Activated CD4-positive, alpha-beta memory T cell treated with anti-CD3 and anti-CD28 coated beads for 36 hours (primary cell): ENCODE measurements at regions of chrX and their contacts with region 1.

Region 1: DNA sequence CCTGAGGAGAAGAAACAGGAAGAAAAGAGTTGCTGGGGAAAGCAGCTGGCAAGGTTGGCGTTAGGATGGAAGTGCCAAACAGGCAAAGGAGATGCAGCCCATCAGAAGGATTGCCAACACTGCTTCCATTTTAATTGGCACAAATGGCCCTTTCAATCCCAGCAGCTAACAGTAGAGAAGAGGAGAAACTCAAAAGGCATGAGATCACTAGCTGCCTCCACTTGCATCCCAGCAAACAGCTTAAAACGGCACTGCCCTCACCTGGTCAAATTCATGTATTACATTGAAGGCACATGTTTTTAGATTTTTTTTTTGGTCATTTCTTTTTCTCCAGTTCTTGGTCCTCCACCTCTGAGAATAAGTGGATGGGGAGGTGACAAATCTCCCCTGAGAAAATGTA is 14.9 kb upstream of the LOC101059915 start:
- DNase-seq: peak; percentile 59
- H3K4me3 Mint-ChIP-seq: no peak overlapping the region
- H3K27ac Mint-ChIP-seq: no peak overlapping the region
- H3K4me1 Mint-ChIP-seq: peaks cover 5% of the 10 kb centered on the region
- H3K27me3 Mint-ChIP-seq: no peaks in the 10 kb centered on the region

Region 2: DNA sequence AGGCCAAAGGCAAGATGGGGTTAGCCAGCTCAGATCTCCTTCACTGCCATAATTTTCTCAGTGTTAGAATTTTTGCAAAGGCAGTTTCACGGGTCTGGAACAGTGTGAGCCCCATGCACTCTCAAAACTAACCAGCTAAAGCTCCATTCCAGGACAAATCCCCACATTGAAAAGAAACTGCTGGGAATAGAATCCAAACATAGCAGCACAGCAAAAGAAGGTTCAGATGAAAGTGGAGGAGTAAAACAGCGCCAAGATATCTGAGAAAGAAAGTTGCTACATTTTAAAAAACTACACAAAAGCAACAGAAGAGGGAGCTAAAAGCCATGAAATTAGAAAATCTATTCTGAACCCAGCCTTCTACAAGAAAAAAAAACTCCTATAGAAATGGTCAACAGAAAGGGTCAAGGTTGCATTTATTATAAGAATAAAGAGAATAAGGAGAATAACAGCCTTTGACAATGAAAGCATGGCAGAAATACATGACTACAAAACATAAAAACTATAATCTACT is 681.9 kb before region 1 on chrX:
- CTCF ChIA-PET with region 1: no interaction called
- POLR2A ChIA-PET with region 1: no interaction called
- intact Hi-C with region 1: loop called (anchors 5 kb)
- DNase-seq: no peak
- H3K4me3 Mint-ChIP-seq: no peak overlapping the region
- H3K27ac Mint-ChIP-seq: no peak overlapping the region
- H3K4me1 Mint-ChIP-seq: peaks cover 6% of the 10 kb centered on the region
- H3K27me3 Mint-ChIP-seq: no peaks in the 10 kb centered on the region

Region 3: DNA sequence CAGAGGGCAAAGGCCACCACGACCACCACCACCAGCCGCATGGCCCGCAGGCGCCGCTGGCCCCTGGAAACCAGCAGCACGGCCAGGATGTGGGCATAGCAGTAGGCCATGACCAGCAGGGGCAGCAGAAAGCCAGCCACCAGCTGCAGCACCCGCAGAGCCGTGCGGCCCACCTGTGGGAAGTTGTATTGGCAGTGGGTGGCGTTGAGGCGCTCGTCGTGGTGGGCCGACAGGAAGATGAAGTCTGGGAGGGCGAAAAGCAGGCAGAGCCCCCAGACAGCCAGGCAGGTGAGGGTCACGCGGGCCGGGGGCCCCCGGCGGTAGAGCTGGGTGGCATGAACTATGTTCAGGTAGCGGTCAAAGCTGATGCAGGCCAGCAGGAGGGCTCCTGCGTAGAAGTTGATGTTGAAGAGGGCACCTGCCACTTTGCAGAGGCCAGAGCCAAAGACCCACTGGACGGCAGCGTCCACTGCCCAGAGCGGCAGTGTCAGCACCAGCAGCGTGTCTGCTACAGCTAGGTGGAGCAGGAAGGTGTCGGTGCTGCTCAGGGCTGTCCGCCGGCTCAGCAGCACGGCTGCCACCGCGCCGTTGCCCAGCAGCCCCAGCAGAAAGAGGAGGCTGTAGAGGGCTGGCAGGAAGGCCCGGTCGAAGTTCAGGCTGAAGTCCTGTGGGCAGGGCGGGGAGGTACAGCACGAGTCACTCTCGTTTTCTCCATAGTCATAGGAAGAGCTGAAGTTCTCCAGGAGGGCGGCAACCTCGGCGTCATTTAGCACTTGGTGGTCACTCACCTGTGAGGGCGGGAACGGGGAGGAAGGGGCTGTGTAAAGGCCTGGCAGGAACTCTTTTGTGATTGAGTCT is 35.5 kb before region 1 on chrX:
- CTCF ChIA-PET with region 1: interaction called, 18 read pairs
- POLR2A ChIA-PET with region 1: no interaction called
- intact Hi-C with region 1: loop called (anchors 1 kb)
- DNase-seq: peak; percentile 68
- H3K4me3 Mint-ChIP-seq: peak overlapping the region; percentile 81
- H3K27ac Mint-ChIP-seq: peak overlapping the region; percentile 98
- H3K4me1 Mint-ChIP-seq: peaks cover 63% of the 10 kb centered on the region
- H3K27me3 Mint-ChIP-seq: no peaks in the 10 kb centered on the region

Region 4: GRCh38 chrX:71622576-71623450 is 29.6 kb before region 1 on chrX:
- CTCF ChIA-PET with region 1: interaction called, 18 read pairs
- POLR2A ChIA-PET with region 1: no interaction called
- intact Hi-C with region 1: no loop called
- DNase-seq: peak; percentile 85
- H3K4me3 Mint-ChIP-seq: peak overlapping the region; percentile 57
- H3K27ac Mint-ChIP-seq: peak overlapping the region; percentile 92
- H3K4me1 Mint-ChIP-seq: peaks cover 64% of the 10 kb centered on the region
- H3K27me3 Mint-ChIP-seq: no peaks in the 10 kb centered on the region